Mammary epithelial cell (primary cell): ENCODE measurements at regions of chr12 and their contacts with region 1.

Region 1: DNA sequence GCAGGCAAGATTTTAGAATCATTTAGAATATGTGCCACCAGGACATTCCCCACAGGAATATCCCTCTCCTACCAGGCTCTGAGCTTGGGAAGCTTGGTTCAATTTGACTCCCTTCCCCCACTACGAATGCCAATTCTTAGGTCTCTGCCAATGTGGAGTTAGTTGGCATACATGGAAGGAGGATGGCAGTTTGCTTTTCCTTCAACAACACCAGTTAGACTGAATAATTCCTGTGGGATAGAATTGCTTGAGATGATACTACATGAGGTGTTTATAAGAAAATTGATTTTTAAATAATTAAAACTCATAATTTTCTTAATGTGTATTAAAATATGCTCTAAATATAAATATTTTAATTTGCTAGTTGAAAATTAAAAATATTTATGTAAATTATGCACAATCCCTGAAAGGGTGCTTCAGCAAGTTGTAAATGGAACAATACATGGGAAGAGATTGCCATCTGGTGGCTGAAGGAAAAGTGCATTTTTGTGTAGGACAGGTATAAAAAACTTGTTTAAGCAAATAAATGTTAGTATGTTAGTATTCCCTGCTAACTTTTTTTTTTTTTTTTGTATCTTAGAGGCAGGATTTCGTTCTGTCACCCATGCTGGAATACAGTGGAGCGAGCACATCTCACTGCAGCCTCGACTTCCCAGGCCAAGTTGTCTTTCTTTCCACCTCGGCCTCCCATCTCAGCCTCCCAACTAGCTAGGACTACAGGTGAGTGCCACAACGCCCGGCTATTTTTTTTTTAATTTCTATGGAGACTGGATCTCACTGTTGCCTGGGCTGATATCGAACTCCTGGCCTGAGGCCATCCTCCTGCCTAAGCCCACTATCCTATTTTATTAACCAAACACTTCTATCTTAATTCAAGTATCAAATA is 25.8 kb upstream of the STRAP start:
- DNase-seq: peak; percentile 41
- H3K4me3 ChIP-seq: no peak overlapping the region
- H3K27ac ChIP-seq: no peak overlapping the region
- H3K4me1 ChIP-seq: peaks cover 10% of the 10 kb centered on the region
- H3K27me3 ChIP-seq: no peaks in the 10 kb centered on the region
- CTCF ChIP-seq: peak; percentile 71 to 73

Region 2: GRCh38 chr12:15276088-15276698 is 580.1 kb before region 1 on chr12:
- CTCF ChIA-PET with region 1: interaction called, 3 read pairs
- dilution Hi-C with region 1: no loop called
- in situ Hi-C with region 1: loop called (anchors 25 kb)
- intact Hi-C with region 1: loop called (anchors 2 kb)
- DNase-seq: peak; percentile 48
- H3K4me3 ChIP-seq: no peak overlapping the region
- H3K27ac ChIP-seq: peak overlapping the region; percentile 88
- H3K4me1 ChIP-seq: peaks cover 54% of the 10 kb centered on the region
- H3K27me3 ChIP-seq: no peaks in the 10 kb centered on the region
- CTCF ChIP-seq: peak; percentile 55 to 58

Region 3: DNA sequence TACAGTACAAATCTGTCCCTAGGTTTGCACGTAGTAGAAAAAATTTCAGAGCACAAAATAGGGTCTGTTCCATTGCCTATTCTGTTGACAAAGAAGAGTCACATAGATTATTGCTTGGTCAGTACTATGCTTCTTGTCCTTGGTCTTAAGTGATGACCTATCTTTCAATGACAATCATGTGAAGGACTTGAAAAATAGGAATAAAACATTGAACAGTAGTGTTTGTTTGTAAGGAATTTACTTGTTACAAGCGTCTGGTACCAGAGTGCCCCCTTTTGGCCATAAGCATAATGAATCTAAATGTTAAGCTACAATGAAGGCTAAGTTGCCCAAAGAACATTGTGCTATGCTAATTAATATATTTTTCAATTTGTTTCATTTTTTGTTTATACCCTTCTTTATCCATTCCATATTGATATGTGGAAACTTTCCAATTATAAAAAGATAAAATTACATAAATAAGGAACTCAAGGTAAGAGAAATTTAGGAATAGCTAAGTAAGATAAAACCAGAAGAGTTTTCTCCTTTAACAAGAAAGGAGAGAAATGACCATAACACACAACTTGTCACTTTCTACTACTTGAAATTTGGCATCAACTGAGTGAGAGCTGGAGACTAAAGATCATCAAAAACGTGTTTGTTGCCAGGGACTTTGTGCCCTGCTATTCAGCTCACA is 271.8 kb before region 1 on chr12:
- CTCF ChIA-PET with region 1: no interaction called
- dilution Hi-C with region 1: no loop called
- in situ Hi-C with region 1: loop called in 1 of 2 experiments (anchors 5 kb)
- intact Hi-C with region 1: no loop called
- DNase-seq: no peak
- H3K4me3 ChIP-seq: no peak overlapping the region
- H3K27ac ChIP-seq: no peak overlapping the region
- H3K4me1 ChIP-seq: no peaks in the 10 kb centered on the region
- H3K27me3 ChIP-seq: peaks cover under 1% of the 10 kb centered on the region
- CTCF ChIP-seq: peak; percentile 73 to 84

Region 4: DNA sequence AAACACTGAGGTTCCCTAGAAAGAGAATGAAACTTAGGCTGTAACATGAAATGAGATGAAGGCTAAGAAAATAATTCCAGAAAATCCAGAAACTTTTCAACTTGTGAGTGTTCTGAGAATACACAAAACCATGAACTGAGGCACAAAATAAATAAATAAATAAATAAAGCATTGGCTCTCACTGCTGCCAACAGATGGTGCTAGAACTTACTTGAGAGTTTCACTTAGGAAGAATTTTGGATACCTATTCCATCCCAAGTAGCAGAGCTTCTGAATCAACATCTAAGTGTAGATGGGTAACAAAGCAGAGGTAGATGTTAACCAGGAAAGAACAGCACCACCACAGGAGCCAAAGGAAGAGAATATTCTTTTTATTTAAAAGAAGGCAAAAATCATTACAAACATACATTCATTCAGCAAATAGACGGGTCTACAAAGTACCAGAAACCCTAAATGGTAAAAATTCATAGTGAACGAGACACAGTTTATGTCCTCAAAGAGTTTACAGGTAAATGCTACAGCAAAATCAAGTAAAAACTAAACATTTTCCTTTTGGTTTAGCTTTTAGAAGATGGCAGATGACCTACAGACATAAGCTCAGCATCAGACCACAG is 83.8 kb before region 1 on chr12:
- CTCF ChIA-PET with region 1: no interaction called
- dilution Hi-C with region 1: no loop called
- in situ Hi-C with region 1: no loop called
- intact Hi-C with region 1: loop called (anchors 1 kb)
- DNase-seq: no peak
- H3K4me3 ChIP-seq: no peak overlapping the region
- H3K27ac ChIP-seq: no peak overlapping the region
- H3K4me1 ChIP-seq: peaks cover 7% of the 10 kb centered on the region
- H3K27me3 ChIP-seq: no peaks in the 10 kb centered on the region
- CTCF ChIP-seq: peak; percentile 60 to 66